Activated naive CD4-positive, alpha-beta T cell treated with anti-CD3 and anti-CD28 coated beads for 36 hours (primary cell): ENCODE measurements at regions of chr9 and their contacts with region 1.

Region 1: GRCh38 chr9:84404095-84404686 is 63.6 kb upstream of the SLC28A3 start:
- DNase-seq: peak; percentile 31
- H3K4me3 Mint-ChIP-seq: no peak overlapping the region
- H3K27ac Mint-ChIP-seq: no peak overlapping the region
- H3K4me1 Mint-ChIP-seq: no peaks in the 10 kb centered on the region
- H3K27me3 Mint-ChIP-seq: peaks cover 2% of the 10 kb centered on the region

Region 2: GRCh38 chr9:84781458-84781857 is 377.3 kb after region 1 on chr9:
- CTCF ChIA-PET with region 1: no interaction called
- intact Hi-C with region 1: loop called (anchors 10 kb)
- DNase-seq: peak; percentile 7
- H3K4me3 Mint-ChIP-seq: no peak overlapping the region
- H3K27ac Mint-ChIP-seq: no peak overlapping the region
- H3K4me1 Mint-ChIP-seq: no peaks in the 10 kb centered on the region
- H3K27me3 Mint-ChIP-seq: peaks cover 4% of the 10 kb centered on the region

Region 3: GRCh38 chr9:84953797-84954705 is 549.9 kb after region 1 on chr9:
- CTCF ChIA-PET with region 1: no interaction called
- intact Hi-C with region 1: loop called (anchors 5 kb)
- DNase-seq: peak; percentile 71
- H3K4me3 Mint-ChIP-seq: no peak overlapping the region
- H3K27ac Mint-ChIP-seq: no peak overlapping the region
- H3K4me1 Mint-ChIP-seq: no peaks in the 10 kb centered on the region
- H3K27me3 Mint-ChIP-seq: peaks cover 19% of the 10 kb centered on the region